Aorta (tissue), 5 donors: ENCODE measurements at regions of chr1 and their contacts with region 1.

Region 1: DNA sequence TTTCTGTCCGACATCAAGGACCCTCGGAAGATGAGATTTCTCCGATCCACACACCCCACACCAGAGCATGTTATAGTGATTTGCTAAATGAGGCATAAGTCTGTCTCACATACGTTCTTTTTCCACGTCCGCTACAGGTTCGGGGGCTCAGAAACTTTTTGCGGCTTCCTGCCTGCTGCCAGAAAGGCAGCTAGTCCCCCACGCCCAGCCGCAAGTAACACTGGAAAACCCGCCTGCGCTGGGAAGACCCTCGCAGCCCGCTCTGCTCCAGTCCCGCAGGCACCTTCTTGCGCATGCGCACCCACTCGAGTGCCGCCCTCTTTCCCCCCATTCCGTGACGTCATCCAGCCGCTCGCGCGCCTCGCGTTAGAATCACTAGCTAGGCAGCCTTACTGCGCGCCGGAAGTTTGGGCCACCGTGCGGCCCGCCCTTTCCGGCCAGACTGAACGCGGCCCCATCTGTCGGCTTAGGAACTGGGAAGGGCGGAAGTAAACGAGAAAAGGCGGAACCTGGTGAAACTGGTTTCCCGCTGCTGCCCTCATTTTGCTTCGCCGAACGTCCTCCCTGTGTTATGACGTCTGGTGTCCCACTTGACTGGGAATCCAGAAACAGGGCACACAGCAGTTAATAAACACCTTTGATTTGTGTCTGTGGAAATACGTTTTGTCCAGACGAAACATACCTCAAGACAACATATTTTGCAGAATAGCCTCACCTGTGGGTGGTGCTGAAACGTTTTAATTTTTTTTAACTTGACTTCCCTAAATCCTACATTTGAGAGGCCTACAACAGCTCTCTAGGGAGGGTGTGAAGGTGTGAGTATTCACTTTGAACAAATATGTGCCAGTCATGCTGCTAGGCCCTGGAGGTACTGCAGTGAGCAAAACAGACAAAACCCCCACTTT is at the start of gene C1orf74:
- DNase-seq: peak; percentile 99 to 100
- ATAC-seq: peak; percentile 100
- H3K4me3 ChIP-seq: peak within 1 kb of the TSS; percentile 53 to 57
- H3K27ac ChIP-seq: peak within 1 kb of the TSS; percentile 59 to 79
- H3K4me1 ChIP-seq: peaks cover 0 to 3% of the 10 kb centered on the region in 2 donors
- H3K27me3 ChIP-seq: no peaks in the 10 kb centered on the region
- total RNA-seq, gene C1orf74: 1.1 to 1.6 TPM

Region 2: DNA sequence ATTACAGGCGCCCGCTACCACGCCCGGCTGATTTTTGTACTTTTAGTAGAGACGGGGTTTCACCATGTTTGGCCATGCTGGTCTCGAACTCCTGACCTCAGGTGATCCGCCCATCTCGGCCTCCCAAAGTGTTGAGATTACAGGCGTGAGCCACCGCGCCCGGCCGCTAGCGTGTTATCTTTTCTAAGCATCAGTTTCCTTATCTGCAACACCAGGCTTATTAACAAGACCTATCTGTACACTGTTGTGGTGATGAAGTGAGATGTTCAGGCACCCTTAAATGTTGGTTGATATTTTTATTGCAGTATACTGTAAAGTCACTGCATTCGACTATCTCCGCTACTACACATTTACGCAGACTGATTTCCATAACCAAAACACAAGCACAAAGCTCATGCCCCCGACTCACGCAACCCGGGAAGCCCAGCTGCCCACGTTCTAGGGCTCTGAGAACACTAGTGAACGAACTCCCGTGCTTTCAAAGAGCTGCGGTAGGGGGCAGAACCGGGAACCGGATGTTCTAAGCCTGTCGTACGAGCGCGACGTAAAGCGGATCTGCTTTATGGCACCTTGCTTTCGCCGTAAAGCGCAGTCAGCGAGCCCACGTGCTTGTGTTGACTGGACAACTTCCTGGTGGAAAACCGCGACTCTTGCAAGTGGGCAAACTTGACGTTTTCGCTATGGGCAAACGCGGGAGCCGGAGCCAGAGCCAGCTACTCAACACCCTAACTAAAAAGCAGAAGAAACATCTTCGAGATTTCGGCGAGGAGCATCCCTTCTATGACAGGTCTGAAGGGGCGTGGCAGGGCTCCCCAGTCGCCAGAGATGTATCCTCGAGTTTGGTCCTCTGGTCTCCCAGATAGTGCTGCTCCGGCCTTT is 43.1 kb after region 1 on chr1 and contains the start of gene UTP25:
- intact Hi-C with region 1: loop called (anchors 1 to 5 kb)
- DNase-seq: peak; percentile 96 to 97
- ATAC-seq: peak; percentile 97
- H3K4me3 ChIP-seq: peak within 1 kb of the TSS; percentile 71 to 73
- H3K27ac ChIP-seq: no peak within 1 kb of the TSS
- H3K4me1 ChIP-seq: no peaks in the 10 kb centered on the region
- H3K27me3 ChIP-seq: no peaks in the 10 kb centered on the region
- total RNA-seq, gene UTP25: 7.2 to 8.1 TPM